H1 (cell line): ENCODE measurements at regions of chr1 and their contacts with region 1.

Region 1: GRCh38 chr1:11072216-11072917 is 12.5 kb upstream of the SRM start:
- DNase-seq: no peak
- H3K4me3 ChIP-seq: no peak overlapping the region
- H3K27ac ChIP-seq: no peak overlapping the region
- H3K4me1 ChIP-seq: no peaks in the 10 kb centered on the region
- H3K27me3 ChIP-seq: no peaks in the 10 kb centered on the region
- CTCF ChIP-seq: no peak
- EP300 ChIP-seq: no peak
- POLR2A ChIP-seq: no peak
- RAD21 ChIP-seq: peak; percentile 9 to 27; a peak in 2 of 4 replicates

Region 2: GRCh38 chr1:11053758-11054137 is 18.6 kb before region 1 on chr1:
- CTCF ChIA-PET with region 1: interaction called, 5 read pairs
- POLR2A ChIA-PET with region 1: interaction called, 18 read pairs
- DNase-seq: peak in 1 of 2 experiments; percentile 89
- H3K4me3 ChIP-seq: no peak overlapping the region
- H3K27ac ChIP-seq: 0 out of 2 replicates have a peak overlapping the region, but pooled peaks have one; percentile 6
- H3K4me1 ChIP-seq: peaks cover 0 to 15% (median 7%) of the 10 kb centered on the region in 4 experiments; a peak in 6 of 7 replicates
- H3K27me3 ChIP-seq: no peaks in the 10 kb centered on the region
- CTCF ChIP-seq: no peak
- EP300 ChIP-seq: no peak
- POLR2A ChIP-seq: no peak
- RAD21 ChIP-seq: no peak

Region 3: GRCh38 chr1:11059990-11060830 is 12.2 kb before region 1 on chr1 and contains the start of gene SRM:
- CTCF ChIA-PET with region 1: interaction called, 46 read pairs
- POLR2A ChIA-PET with region 1: interaction called, 18 read pairs
- DNase-seq: peak in 1 of 2 experiments; percentile 90
- H3K4me3 ChIP-seq: peak within 1 kb of the TSS; percentile 79 to 98 (median 86)
- H3K27ac ChIP-seq: peak within 1 kb of the TSS; percentile 83
- H3K4me1 ChIP-seq: peaks cover 0 to 12% (median 3%) of the 10 kb centered on the region in 4 experiments; a peak in 4 of 7 replicates
- H3K27me3 ChIP-seq: no peaks in the 10 kb centered on the region
- CTCF ChIP-seq: peak in 2 of 3 experiments; percentile 35 to 43; a peak in 3 of 4 replicates
- EP300 ChIP-seq: no peak
- POLR2A ChIP-seq: peak in 1 of 2 experiments; percentile 18; a peak in 1 of 3 replicates
- RAD21 ChIP-seq: peak in 1 of 2 experiments; percentile 25; a peak in 1 of 4 replicates
- total RNA-seq, gene SRM: 206 and 208 TPM in 2 replicates